ENCODE measurements at regions of chr14 and their contacts with region 1.

Region 1: DNA sequence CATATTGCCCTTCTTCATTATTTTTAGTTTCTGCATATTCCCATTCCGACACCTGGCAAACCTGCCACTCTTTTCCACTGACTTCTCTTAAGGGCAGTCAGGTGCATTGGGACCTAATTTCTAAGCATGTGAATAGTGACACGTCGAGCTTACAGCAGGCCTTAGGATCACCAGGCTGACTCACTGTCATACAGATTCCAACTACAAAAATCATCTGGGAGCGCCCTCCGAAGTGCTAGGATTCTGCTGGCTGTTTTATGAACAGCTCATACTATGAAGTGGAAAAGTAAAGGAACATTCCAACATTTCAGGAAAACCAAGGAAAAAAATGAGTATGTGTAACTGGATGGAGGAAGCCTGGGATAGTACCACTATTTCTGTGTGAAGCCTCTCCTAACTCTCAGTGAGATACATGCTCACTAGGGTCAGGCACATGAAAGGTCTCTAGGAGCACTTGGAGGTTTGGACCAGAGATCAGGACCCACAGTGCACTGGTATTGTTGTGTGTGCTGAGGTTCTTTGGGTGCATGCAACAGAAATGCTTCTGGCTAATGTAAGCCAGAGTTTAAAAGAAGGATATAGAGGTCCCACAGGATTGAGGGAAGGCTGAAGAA is 257.4 kb downstream of the ZFP36L1 start:
- DNase-seq: no peak
- ATAC-seq: no peak
- H3K4me3 ChIP-seq: no peak overlapping the region
- H3K4me3 Mint-ChIP-seq: no peak overlapping the region
- H3K27ac ChIP-seq: no peak overlapping the region
- H3K27ac Mint-ChIP-seq: peak overlapping the region; percentile 18
- H3K4me1 ChIP-seq: no peaks in the 10 kb centered on the region
- H3K4me1 Mint-ChIP-seq: peaks cover 3% of the 10 kb centered on the region
- H3K27me3 ChIP-seq: no peaks in the 10 kb centered on the region
- H3K27me3 Mint-ChIP-seq: no peaks in the 10 kb centered on the region
- CTCF ChIP-seq: no peak

Region 2: DNA sequence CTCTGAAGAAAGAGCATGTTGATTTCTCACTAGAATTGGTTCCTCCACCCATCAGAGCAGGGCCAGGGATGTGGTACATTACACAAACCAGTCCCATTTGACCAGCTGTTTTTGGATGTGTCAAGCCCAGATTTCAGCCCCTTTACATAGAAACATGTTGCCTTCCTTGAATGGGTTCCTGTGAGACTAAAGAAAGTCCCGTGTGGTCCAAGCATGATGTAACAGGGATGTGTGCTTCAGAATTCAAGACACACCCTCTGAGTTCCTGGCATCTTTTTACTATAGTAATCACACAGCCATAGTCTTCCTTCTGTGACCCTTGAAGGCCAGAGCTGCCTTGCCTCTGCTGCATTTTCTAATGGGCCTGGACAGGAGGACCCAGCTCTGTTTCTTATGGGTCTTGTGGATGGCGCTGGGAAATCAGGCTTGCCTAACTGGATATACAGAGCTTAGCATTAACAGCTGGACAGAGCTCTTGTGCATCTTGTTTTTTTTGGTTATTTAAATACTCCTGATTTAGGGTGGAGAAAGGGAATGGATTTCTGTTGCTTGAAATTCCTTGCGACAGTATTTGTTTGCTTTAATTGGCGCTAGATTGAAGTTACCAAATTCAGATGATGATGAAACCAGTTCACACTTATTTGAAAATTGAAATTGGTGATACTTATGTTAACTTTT is 83.7 kb before region 1 on chr14:
- CTCF ChIA-PET with region 1: no interaction called
- POLR2A ChIA-PET with region 1: no interaction called
- intact Hi-C with region 1: loop called (anchors 5 kb)
- DNase-seq: no peak
- ATAC-seq: no peak
- H3K4me3 ChIP-seq: no peak overlapping the region
- H3K4me3 Mint-ChIP-seq: no peak overlapping the region
- H3K27ac ChIP-seq: no peak overlapping the region
- H3K27ac Mint-ChIP-seq: no peak overlapping the region
- H3K4me1 ChIP-seq: peaks cover 6 to 7% of the 10 kb centered on the region in 2 donors
- H3K4me1 Mint-ChIP-seq: peaks cover 17% of the 10 kb centered on the region
- H3K27me3 ChIP-seq: no peaks in the 10 kb centered on the region
- H3K27me3 Mint-ChIP-seq: no peaks in the 10 kb centered on the region
- CTCF ChIP-seq: no peak

Region 3: DNA sequence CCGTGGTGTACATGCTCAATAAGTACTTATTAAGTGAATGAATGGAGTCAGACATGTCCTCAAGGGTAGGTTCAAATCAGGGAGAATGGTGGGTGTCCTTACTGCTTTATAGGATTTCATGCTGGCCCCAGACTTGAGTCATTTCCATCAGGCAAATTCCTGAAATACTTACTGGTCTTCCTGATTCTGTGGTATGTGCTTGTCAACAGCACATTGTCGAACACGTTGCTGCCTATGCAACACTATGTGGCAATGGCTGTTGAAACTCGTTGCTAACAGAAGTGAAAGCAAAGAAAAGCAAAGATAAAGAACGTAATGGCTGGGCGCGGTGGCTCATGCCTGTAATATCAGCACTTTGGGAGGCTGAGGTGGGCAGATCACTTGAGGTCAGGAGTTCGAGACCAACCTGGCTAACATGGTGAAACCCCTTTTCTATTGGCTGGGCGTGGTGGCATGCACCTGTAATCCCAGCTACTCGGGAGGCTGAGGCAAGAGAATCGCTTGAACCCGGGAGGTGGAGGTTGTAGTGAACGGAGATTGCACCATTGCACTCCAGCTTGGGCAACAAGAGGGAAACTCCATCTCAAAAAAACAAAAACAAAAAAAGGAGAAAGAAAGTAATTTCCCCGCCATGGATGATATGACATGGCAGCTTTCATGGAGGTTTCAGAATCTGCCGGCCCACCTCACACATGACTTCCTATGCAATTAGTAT is 42.5 kb after region 1 on chr14:
- CTCF ChIA-PET with region 1: no interaction called
- POLR2A ChIA-PET with region 1: no interaction called
- intact Hi-C with region 1: no loop called
- DNase-seq: no peak
- ATAC-seq: no peak
- H3K4me3 ChIP-seq: no peak overlapping the region
- H3K4me3 Mint-ChIP-seq: no peak overlapping the region
- H3K27ac ChIP-seq: no peak overlapping the region
- H3K27ac Mint-ChIP-seq: no peak overlapping the region
- H3K4me1 ChIP-seq: no peaks in the 10 kb centered on the region
- H3K4me1 Mint-ChIP-seq: peaks cover 1% of the 10 kb centered on the region
- H3K27me3 ChIP-seq: no peaks in the 10 kb centered on the region
- H3K27me3 Mint-ChIP-seq: no peaks in the 10 kb centered on the region
- CTCF ChIP-seq: no peak

Region 4: DNA sequence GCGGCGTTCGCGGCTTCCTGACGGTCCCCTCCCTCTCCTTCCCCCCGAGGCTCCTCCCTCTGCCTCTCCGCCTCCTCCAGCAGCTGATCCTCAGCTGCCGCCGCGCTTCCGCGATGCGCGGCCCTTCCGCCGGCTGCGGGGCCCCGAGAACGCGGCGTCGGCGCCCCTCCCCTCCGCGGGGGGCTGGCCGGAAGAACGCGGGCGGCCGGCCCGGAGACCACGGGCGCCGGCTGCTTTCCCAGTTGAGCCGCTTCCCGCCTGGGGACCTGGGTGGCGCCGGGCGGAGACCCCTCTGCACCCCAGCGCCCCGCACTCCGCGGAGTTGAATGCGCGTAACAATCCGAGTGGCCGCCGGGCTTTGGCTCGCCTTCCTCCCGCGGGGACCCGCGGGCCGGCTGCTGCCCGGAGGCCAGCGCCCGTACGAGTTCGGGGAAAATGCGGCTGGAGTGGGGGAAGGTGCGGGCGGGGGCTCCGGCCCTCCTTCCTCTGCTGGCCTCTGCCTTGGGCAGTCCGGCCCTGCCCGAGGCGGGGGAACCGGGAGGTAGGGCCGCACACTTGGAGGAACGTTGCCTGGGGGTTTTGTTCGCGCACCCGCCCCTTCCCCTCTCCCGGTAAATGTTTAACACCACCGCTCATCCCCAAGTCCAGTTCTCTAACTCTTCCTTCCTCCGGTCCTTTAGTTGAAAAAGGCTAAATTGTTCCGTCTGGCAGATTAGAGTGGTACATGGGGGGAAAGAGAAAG is 617.8 kb after region 1 on chr14:
- CTCF ChIA-PET with region 1: no interaction called
- POLR2A ChIA-PET with region 1: no interaction called
- intact Hi-C with region 1: no loop called
- DNase-seq: peak; percentile 95
- ATAC-seq: peak; percentile 92
- H3K4me3 ChIP-seq: peak overlapping the region; percentile 21 to 94 (median 92)
- H3K4me3 Mint-ChIP-seq: peak overlapping the region; percentile 89
- H3K27ac ChIP-seq: peak overlapping the region; percentile 56 to 72
- H3K27ac Mint-ChIP-seq: peak overlapping the region; percentile 95
- H3K4me1 ChIP-seq: peaks cover 9 to 21% of the 10 kb centered on the region in 2 donors
- H3K4me1 Mint-ChIP-seq: peaks cover 32% of the 10 kb centered on the region
- H3K27me3 ChIP-seq: no peaks in the 10 kb centered on the region
- H3K27me3 Mint-ChIP-seq: peaks cover 3% of the 10 kb centered on the region
- CTCF ChIP-seq: no peak